KBM-7 (cell line): ENCODE measurements at regions of chr4 and their contacts with region 1.

Region 1: DNA sequence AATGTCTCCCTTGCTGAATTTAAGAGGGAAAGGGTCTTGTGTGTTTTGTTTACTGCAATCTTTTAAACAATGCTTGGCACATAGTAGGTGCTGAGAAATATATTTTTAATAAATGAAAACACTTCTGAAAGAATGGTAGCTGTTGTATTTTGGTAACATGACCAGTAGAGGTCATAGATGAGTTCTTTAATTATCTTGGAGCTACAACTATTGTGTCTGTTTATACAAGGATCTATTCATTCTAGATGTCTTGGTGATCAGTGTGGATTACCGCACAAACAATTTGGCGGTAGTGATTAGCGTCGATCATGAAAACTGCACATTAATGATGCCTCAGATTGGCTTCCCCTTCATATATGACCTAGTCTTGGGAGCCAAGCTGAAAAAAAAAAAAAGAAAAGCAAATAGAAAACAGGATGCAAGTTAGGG is 21.4 kb upstream of the SCRG1 start:
- DNase-seq: peak; percentile 40

Region 2: GRCh38 chr4:172819353-172819752 is 601.0 kb before region 1 on chr4:
- in situ Hi-C with region 1: no loop called
- DNase-seq: no peak

Region 3: GRCh38 chr4:173013232-173013930 is 407.0 kb before region 1 on chr4:
- in situ Hi-C with region 1: loop called (anchors 25 kb)
- DNase-seq: peak; percentile 82

Region 4: DNA sequence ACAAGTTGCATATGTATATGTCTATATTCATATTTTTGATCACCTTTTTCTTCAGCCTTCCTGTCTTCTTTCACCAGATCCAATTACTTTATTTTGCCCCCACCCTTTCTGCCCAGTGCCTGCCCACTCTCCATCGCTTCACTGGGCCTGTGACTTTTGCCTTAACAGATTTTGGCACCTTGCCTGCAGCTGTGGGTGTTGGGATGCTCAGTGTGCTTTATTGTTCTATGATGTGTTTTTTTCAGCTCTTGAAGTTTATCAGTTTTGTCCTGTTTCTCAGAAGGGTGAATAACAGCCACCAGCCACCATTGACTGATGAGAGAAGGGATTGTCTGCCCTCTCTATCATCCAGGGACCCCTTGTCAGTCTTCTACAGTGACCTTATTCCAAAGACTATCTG is 329.0 kb before region 1 on chr4:
- in situ Hi-C with region 1: no loop called
- DNase-seq: no peak

Region 5: GRCh38 chr4:173318648-173319211 is 101.6 kb before region 1 on chr4:
- in situ Hi-C with region 1: loop called (anchors 10 kb)
- DNase-seq: no peak